Left cardiac atrium (tissue), 4 donors: ENCODE measurements at regions of chr10 and their contacts with region 1.

Region 1: DNA sequence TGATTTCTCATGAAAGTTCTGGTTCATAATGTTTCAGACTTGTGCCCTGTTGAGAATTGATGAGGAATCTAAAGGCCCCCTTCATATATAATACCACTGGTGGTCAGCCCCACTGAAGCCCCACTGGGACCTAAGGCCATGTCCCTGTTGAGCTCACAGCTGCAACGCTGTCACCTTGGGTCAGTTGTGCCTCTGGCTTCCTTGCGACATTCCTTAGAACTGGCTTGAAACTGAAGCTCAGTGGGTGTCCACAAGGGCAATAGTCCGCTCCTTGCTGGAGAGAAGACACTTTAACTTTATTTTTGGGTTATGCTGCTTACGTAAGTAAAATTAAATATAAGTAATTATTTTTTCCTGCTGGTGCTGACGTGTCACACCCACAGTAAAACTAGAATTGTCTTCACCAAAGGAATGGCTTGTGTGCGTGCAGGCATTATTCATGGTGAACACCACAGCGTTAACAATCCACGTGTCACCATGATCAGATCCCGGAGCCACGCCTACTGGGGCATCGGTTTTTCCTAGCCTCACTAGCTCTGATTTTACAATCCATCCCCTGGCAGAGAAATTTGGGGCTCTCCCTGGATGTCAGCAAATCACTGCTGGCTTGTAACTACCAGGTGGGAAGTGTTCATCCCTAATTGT is 66.5 kb downstream of the BICC1 start:
- DNase-seq: no peak
- ATAC-seq: no peak

Region 2: GRCh38 chr10:58599927-58600553 is 20.9 kb after region 1 on chr10:
- intact Hi-C with region 1: loop called in 1 of 2 experiments (anchors 1 kb)
- DNase-seq: no peak
- ATAC-seq: no peak

Region 3: GRCh38 chr10:58662314-58662713 is 83.2 kb after region 1 on chr10:
- intact Hi-C with region 1: no loop called
- DNase-seq: no peak
- ATAC-seq: peak in 1 of 2 donors; percentile 76

Region 4: DNA sequence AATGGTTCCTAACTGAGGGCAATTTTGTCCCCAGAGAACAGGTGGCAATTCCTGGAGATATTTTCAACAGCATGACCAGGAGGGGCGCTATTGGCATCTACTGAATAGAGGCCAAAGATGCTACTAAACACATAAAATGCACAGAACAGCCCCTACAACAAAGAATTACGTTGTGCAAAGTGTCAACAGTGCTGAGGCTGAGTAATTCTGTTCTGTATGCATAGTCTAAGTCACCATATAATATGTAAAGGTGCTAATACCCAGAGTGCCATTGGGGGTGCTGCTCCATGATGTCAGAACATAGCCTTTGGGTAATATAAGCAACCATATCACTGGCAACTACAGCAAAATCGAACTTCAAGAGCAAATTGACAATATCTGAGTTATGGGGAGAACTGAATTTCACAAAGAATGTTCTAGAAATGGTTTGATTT is 384.0 kb after region 1 on chr10:
- intact Hi-C with region 1: no loop called
- DNase-seq: no peak
- ATAC-seq: no peak